ENCODE measurements at regions of chr3 and their contacts with region 1.

Region 1: DNA sequence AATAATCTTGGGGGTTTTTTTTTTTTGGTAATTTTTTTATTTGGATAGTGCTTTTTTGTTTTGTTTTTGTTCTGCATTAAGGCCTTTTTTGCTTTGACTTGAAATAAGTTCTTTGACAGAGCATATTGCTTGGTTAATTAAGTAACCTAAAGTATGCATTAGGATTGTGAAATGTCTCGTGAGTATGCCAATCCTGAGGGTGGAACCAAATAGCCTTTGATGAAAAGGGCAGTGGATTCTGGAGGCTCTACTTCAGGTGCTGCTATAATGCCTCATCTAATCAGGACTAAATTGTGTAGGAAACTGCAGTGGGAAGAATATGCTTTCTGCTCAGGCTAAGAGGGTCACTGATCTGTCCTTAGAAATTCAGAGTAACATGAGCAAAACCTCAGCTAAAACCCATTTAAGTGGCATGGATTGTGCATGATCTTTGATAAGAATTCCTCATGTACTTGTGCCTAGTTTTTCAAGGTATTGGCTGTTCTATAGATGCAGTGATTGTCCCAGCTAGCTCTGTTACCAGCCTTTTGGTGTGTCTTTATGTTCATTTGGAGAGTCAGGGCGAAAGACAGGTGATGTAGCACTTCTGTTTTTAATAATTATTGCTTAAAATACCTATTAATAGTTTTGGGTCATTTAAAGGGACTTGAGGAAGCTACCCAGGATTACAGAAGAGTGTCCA is 15.4 kb downstream of the CDV3 start:
- DNase-seq: no peak
- ATAC-seq: no peak

Region 2: DNA sequence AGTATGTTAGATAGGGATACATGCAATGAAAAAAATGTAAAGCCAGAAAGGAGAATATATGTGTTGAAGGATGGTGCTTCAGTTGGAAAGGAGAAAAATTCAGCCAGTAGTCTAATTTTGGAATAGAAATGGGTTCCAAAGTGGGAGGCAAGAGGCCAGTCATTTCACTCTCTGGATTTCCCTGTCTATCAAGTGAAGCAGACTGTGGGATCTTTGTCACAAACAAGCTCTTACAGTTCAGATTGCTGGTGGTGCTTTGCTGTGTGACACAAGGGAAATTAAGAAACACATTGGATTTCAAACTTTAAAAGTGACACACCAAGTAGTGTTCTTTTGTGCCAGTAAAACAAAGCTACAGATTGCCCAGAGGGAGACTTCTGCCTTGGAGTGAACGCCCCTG is 271.1 kb before region 1 on chr3:
- intact Hi-C with region 1: no loop called
- DNase-seq: no peak
- ATAC-seq: no peak

Region 3: GRCh38 chr3:133487920-133488540 is 100.9 kb before region 1 on chr3:
- intact Hi-C with region 1: loop called (anchors 10 kb)
- DNase-seq: no peak
- ATAC-seq: peak; percentile 32